A549 (cell line): ENCODE measurements at regions of chr19 and their contacts with region 1.

Region 1: DNA sequence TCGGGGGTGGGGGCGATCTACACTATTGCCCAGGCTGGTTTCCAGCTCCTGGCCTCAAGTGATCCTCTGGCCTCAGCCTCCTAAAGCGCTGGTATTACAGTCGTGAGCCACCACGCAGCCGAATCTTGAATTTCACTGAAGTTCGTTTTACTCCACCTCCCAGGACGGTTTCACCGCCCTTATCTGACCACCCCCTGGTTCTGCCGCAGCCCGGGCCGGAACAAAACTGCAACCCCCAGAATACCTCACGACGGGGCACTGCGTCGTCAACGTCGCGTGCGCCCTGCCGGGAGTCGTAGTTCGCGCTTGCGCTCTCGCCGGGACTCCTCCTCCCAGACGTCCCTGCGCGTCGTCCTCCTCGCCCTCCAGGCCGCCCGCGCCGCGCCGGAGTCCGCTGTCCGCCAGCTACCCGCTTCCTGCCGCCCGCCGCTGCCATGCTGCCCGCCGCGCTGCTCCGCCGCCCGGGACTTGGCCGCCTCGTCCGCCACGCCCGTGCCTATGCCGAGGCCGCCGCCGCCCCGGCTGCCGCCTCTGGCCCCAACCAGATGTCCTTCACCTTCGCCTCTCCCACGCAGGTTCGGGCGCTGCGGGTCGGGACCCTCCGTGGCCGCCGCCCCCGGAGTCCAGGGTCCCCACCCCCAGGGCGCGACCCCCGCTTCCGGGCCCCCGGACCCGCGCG is at the start of gene ATP5F1D:
- DNase-seq: peak; percentile 83 to 94
- ATAC-seq: peak; percentile 51 to 66
- H3K4me3 ChIP-seq: peak within 1 kb of the TSS; percentile 77
- H3K27ac ChIP-seq: peak within 1 kb of the TSS; percentile 89 to 100
- H3K4me1 ChIP-seq: peaks cover 49% of the 10 kb centered on the region
- CTCF ChIP-seq: no peak
- EP300 ChIP-seq: no peak
- POLR2A ChIP-seq: peak; percentile 71
- RAD21 ChIP-seq: no peak
- polyA plus RNA-seq, gene ATP5F1D: 18.5 and 28.7 TPM in 2 replicates

Region 2: GRCh38 chr19:1094975-1095701 is 146.4 kb before region 1 on chr19 and contains the start of gene POLR2E:
- CTCF ChIA-PET with region 1: interaction called, 10 read pairs
- POLR2A ChIA-PET with region 1: no interaction called
- DNase-seq: peak; percentile 79 to 97
- ATAC-seq: peak; percentile 91 to 93
- H3K4me3 ChIP-seq: peak within 1 kb of the TSS; percentile 80
- H3K27ac ChIP-seq: peak within 1 kb of the TSS; percentile 84 to 97
- H3K4me1 ChIP-seq: peaks cover 34% of the 10 kb centered on the region
- CTCF ChIP-seq: no peak
- EP300 ChIP-seq: no peak
- POLR2A ChIP-seq: peak; percentile 83
- RAD21 ChIP-seq: no peak
- polyA plus RNA-seq, gene POLR2E: 81.0 and 99.6 TPM in 2 replicates

Region 3: DNA sequence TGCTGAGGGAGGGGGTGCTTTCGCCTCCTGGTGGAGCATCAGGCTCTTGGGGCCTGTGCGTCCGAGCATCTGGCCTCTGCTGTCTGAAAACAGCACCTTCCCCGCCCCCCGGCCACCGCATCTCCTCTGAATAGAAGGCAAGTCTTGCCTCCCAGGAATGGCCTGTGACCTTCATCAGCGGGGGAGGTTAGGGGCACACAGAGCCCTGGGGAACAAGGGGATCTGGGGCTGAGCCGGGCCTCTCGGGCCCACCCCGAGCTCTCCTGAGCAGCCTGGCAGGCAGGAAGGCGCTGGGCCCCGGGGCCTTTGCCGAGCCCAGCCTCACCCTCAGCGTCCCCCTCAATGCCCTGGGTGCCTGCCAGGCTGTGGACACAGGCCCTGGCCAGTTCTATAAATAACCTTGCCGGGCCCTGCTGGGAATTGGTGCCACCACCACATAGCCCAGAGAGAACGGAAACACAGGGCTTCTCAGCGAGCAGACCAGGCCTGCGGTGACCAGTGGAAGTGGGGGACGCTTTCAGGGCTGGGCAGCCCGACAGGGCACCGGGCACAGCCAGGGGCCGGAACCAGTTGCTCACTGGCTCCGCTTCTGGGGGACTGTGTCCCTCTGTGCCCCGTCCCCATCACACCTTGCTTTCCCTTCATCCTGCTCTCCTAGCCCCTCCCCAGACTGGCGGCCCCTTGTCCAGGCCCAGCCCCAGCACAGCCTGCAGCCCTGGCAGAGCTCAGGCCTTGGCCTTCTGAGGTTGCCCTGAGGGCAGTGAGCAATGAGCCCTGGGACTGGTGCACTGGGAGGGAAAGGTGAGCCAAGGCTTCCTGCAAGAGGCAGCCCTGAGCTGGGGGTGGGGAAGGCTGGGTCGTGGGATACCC is 26.5 kb before region 1 on chr19:
- CTCF ChIA-PET with region 1: interaction called, 38 read pairs
- POLR2A ChIA-PET with region 1: no interaction called
- DNase-seq: no peak
- ATAC-seq: peak in 1 of 2 experiments; percentile 15; a peak in 1 of 6 replicates
- H3K4me3 ChIP-seq: no peak overlapping the region
- H3K27ac ChIP-seq: peak overlapping the region in 1 of 2 experiments; percentile 65; a peak in 3 of 6 replicates
- H3K4me1 ChIP-seq: peaks cover 24% of the 10 kb centered on the region
- CTCF ChIP-seq: no peak
- EP300 ChIP-seq: no peak
- POLR2A ChIP-seq: no peak
- RAD21 ChIP-seq: no peak

Region 4: DNA sequence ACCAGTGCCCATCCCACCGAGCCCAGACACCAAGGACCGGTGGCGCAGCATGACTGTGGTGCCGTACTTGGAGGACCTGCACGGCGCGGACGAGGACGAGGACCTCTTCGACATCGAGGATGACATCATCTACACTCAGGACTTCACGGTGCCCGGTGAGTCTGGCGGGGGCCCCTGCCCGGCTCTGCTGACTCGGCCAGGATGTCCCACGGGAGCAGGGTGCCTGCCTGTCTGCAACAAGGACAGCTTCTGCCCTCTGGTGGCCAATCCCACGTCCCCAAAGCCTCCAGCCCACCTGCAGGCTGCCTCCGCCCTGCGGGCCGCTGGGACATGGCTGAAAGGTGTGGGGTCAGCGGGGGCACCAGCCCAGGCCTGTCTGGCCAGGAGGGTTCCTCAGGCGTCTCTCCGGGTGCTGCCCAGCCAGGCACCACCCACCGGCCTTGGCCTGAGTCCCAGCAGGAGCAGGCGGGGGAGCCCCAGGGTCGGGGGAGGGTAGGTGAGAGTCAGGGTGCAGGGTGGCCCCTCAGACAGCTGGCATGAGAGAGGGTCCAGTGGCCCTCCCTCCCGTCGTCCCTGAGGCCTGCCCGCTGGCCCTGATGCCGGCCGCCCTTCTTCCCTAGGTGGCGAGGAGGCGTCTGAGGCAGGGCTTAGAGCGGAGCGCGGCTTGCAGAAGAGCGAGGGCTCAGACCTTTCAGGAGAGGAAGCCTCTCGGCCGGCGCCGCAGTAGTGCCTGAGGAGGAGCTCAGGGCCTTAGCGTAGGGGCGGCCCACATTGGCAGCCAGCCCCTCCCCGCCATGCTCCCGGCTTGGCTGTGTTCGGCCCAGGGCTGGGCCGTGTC is 18.3 kb before region 1 on chr19:
- CTCF ChIA-PET with region 1: interaction called, 38 read pairs
- POLR2A ChIA-PET with region 1: no interaction called
- DNase-seq: peak in 1 of 2 experiments; percentile 61
- ATAC-seq: peak; percentile 52 to 73; a peak in 4 of 6 replicates
- H3K4me3 ChIP-seq: no peak overlapping the region
- H3K27ac ChIP-seq: peak overlapping the region in 1 of 2 experiments; percentile 43; a peak in 2 of 6 replicates
- H3K4me1 ChIP-seq: peaks cover 14% of the 10 kb centered on the region; the same call in 1 of the 3 replicates
- CTCF ChIP-seq: peak; percentile 52; the same call in 2 of the 3 replicates
- EP300 ChIP-seq: no peak
- POLR2A ChIP-seq: no peak
- RAD21 ChIP-seq: peak; percentile 50 to 54

Region 5: DNA sequence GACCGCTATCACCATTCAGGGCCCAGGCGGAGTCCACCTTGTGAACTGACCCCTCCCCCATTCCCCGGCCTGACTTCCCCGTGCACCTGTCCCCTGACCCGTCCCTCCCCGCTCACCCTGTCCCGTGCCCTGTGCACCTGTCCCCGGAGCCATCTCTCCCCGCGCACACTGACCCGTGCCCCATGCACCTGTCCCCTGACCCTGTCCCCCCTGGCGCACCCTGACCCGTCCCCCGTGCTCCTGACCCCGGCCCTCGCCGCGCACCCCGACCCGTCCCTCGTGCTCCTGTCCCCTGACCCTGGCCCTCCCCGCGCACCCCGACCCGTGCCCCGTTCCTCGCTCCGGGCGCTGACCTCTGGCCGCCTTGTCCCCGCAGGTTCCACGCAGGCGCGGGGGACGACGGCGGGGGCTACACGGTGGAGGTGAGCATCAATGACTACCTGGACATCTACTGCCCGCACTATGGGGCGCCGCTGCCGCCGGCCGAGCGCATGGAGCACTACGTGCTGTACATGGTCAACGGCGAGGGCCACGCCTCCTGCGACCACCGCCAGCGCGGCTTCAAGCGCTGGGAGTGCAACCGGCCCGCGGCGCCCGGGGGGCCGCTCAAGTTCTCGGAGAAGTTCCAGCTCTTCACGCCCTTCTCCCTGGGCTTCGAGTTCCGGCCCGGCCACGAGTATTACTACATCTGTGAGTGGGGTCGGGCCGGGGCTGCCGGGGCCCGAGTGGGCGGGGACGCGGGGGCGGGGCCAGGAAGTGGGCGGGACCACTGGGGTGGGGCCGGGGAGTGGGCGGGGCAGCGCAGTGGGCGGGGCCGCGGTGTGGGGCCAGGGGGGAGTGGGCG is 53.8 kb after region 1 on chr19:
- CTCF ChIA-PET with region 1: no interaction called
- POLR2A ChIA-PET with region 1: no interaction called
- DNase-seq: no peak
- ATAC-seq: peak; percentile 22 to 54; a peak in 4 of 6 replicates
- H3K4me3 ChIP-seq: peak overlapping the region; percentile 40
- H3K27ac ChIP-seq: peak overlapping the region in 1 of 2 experiments; percentile 46; a peak in 2 of 6 replicates
- H3K4me1 ChIP-seq: peaks cover 23% of the 10 kb centered on the region
- CTCF ChIP-seq: no peak
- EP300 ChIP-seq: no peak
- POLR2A ChIP-seq: no peak
- RAD21 ChIP-seq: no peak